GM10248 (cell line): ENCODE measurements at regions of chr2 and their contacts with region 1.

Region 1: GRCh38 chr2:205872716-205873115 is 190.4 kb downstream of the NRP2 start:
- DNase-seq: no peak
- CTCF ChIP-seq: no peak

Region 2: DNA sequence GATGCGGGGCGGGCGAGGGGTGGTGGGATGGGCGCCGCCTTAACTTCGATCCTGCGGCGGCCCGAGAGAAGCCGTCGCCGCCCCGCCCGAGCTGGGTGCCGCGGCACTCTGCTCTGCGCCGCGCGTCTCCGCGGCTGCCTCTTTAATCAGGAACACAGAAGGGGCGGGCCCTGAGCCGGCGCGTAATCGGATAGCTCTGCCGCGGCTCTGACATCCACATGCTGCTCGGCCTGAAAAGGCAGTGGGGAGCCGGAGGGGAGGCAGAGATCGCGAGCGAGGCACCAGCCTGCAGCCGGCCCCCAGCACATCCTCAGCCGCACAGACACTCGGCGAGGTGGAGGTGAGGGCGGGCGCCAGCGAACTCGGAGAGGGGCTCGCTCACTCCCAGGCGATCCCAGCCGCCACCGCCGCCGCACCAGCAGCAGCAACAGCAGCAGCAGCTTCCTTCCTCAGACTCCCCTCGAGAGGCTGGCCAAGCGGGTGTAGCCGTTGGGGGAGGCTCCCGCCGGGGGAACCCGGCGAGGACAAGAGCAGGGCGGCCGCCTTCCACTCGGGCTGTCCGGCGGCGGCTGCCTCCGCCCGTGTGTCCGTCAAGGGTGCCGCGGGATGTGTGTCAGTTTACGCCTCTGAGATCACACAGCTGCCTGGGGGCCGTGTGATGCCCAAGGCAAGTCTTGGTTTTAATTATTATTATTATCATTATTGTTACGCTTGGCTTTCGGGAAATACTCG is 190.3 kb before region 1 on chr2 and contains the start of gene NRP2:
- CTCF ChIA-PET with region 1: no interaction called
- POLR2A ChIA-PET with region 1: no interaction called
- DNase-seq: peak; percentile 57
- CTCF ChIP-seq: no peak

Region 3: GRCh38 chr2:205885492-205886099 is 12.9 kb after region 1 on chr2:
- CTCF ChIA-PET with region 1: interaction called, 34 read pairs
- POLR2A ChIA-PET with region 1: no interaction called
- DNase-seq: peak; percentile 80
- CTCF ChIP-seq: peak; percentile 95